ENCODE measurements at regions of chr7 and their contacts with region 1.

Region 1: DNA sequence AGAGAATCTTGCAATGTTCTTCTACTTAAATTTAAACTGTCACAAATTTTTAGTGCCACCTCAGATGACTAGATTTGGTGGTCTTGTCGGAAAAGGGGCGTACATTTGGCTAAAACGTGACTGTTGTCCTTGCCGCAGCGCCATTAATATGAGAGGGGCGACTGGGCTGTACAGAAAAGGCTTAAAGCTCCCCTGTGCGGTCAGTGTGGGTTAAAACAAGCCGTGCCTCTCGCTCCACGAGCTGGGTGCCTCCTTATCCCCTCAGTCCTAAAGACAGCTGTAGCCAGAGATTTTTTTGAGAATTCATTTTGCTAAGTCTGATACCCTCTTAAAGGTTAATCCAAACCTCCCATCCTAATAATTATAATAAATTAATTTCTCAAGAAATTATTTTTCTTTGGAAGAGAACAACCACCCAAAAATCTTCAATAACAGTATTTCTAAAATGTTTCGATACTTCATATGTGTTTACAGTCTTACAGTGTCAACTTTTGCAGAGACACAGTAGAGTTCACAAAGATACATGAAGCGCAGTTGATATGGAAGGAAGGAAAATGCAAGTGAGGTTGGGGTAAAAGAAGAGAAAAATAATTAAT is 68.6 kb downstream of the C7orf25 start:
- DNase-seq: no peak
- H3K4me3 ChIP-seq: no peak overlapping the region
- H3K27ac ChIP-seq: no peak overlapping the region
- H3K4me1 ChIP-seq: no peaks in the 10 kb centered on the region
- H3K27me3 ChIP-seq: peaks cover 0 to 44% (median 0%) of the 10 kb centered on the region in 7 donors
- CTCF ChIP-seq: peak in 5 of 11 experiments; percentile 18 to 52 (median 29)
- POLR2A ChIP-seq: no peak

Region 2: GRCh38 chr7:41940760-41941343 is 902.5 kb before region 1 on chr7:
- intact Hi-C with region 1: loop called (anchors 10 kb)
- DNase-seq: no peak
- H3K4me3 ChIP-seq: no peak overlapping the region
- H3K27ac ChIP-seq: no peak overlapping the region
- H3K4me1 ChIP-seq: peaks cover 0 to 30% (median 18%) of the 10 kb centered on the region in 6 donors
- H3K27me3 ChIP-seq: peaks cover 0 to 21% (median 0%) of the 10 kb centered on the region in 7 donors
- CTCF ChIP-seq: peak; percentile 45 to 95 (median 86)
- POLR2A ChIP-seq: no peak

Region 3: DNA sequence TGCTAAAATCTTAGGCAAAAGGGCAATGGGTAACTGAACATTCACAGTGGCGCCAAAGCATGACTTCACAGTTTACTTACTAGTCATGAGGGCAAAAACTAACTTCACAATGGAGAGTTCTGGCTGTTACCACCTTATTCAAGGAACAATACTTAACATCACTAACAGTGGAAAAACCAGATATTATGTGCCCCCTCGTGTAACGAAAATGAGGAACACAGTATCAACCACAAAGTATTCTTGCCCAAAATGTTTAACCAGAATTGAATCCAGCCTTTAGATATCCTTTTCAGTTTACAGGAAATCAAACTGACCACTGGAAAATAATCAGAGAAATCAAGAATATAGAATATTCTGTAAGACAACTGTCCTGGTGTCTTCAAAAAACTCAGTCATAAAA is 59.0 kb after region 1 on chr7:
- intact Hi-C with region 1: no loop called
- DNase-seq: no peak
- H3K4me3 ChIP-seq: no peak overlapping the region
- H3K27ac ChIP-seq: no peak overlapping the region
- H3K4me1 ChIP-seq: peaks cover 0 to 2% (median 0%) of the 10 kb centered on the region in 6 donors
- H3K27me3 ChIP-seq: no peaks in the 10 kb centered on the region
- CTCF ChIP-seq: no peak
- POLR2A ChIP-seq: no peak

Region 4: GRCh38 chr7:42924223-42924838 is 81.0 kb after region 1 on chr7:
- intact Hi-C with region 1: no loop called
- DNase-seq: no peak
- H3K4me3 ChIP-seq: no peak overlapping the region
- H3K27ac ChIP-seq: no peak overlapping the region
- H3K4me1 ChIP-seq: peaks cover 11 to 66% (median 38%) of the 10 kb centered on the region in 6 donors
- H3K27me3 ChIP-seq: no peaks in the 10 kb centered on the region
- CTCF ChIP-seq: no peak
- POLR2A ChIP-seq: no peak